CD4-positive, alpha-beta T cell (primary cell): ENCODE measurements at regions of chr4 and their contacts with region 1.

Region 1: GRCh38 chr4:81913427-81913879 is 441.7 kb upstream of the RASGEF1B start:
- DNase-seq: peak; percentile 11 to 75 (median 38)
- ATAC-seq: peak; percentile 82
- H3K4me3 ChIP-seq: no peak overlapping the region
- H3K4me3 Mint-ChIP-seq: no peak overlapping the region
- H3K27ac ChIP-seq: no peak overlapping the region
- H3K27ac Mint-ChIP-seq: no peak overlapping the region
- H3K4me1 ChIP-seq: no peaks in the 10 kb centered on the region
- H3K4me1 Mint-ChIP-seq: peaks cover 10% of the 10 kb centered on the region
- H3K27me3 ChIP-seq: peaks cover 0 to 4% of the 10 kb centered on the region in 2 experiments
- H3K27me3 Mint-ChIP-seq: peaks cover 5% of the 10 kb centered on the region
- CTCF ChIP-seq: peak; percentile 79

Region 2: GRCh38 chr4:81651243-81651899 is 262.1 kb before region 1 on chr4:
- CTCF ChIA-PET with region 1: no interaction called
- POLR2A ChIA-PET with region 1: no interaction called
- intact Hi-C with region 1: no loop called
- DNase-seq: no peak
- ATAC-seq: no peak
- H3K4me3 ChIP-seq: no peak overlapping the region
- H3K4me3 Mint-ChIP-seq: no peak overlapping the region
- H3K27ac ChIP-seq: no peak overlapping the region
- H3K27ac Mint-ChIP-seq: peak overlapping the region; percentile 31
- H3K4me1 ChIP-seq: peaks cover 4% of the 10 kb centered on the region
- H3K4me1 Mint-ChIP-seq: peaks cover 55% of the 10 kb centered on the region
- H3K27me3 ChIP-seq: no peaks in the 10 kb centered on the region
- H3K27me3 Mint-ChIP-seq: no peaks in the 10 kb centered on the region
- CTCF ChIP-seq: no peak

Region 3: DNA sequence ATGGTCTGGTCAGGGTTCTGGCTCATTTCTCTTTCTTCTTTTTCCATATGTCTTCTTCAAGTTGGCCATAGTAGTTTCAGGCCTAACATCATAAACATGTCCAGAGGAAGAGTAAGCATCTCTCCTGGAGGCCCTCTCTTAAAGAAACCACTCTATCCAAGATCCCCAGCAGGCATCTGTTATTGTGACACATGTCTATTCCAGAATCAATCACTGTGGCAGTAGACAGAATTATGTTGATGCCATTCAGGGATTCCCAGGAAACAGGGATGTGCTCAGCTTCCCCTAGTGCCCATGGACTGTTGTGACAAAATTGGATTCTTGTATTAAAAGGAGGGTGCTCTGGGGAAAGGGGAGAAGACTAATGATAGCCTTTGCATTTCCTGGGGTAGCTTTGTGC is 236.3 kb after region 1 on chr4:
- CTCF ChIA-PET with region 1: no interaction called
- POLR2A ChIA-PET with region 1: no interaction called
- intact Hi-C with region 1: no loop called
- DNase-seq: no peak
- ATAC-seq: no peak
- H3K4me3 ChIP-seq: no peak overlapping the region
- H3K4me3 Mint-ChIP-seq: no peak overlapping the region
- H3K27ac ChIP-seq: no peak overlapping the region
- H3K27ac Mint-ChIP-seq: no peak overlapping the region
- H3K4me1 ChIP-seq: peaks cover 5% of the 10 kb centered on the region
- H3K4me1 Mint-ChIP-seq: peaks cover 19% of the 10 kb centered on the region
- H3K27me3 ChIP-seq: no peaks in the 10 kb centered on the region
- H3K27me3 Mint-ChIP-seq: no peaks in the 10 kb centered on the region
- CTCF ChIP-seq: no peak

Region 4: GRCh38 chr4:82268050-82268825 is 354.8 kb after region 1 on chr4:
- CTCF ChIA-PET with region 1: no interaction called
- POLR2A ChIA-PET with region 1: no interaction called
- intact Hi-C with region 1: loop called (anchors 2 to 10 kb)
- DNase-seq: peak in 12 of 14 experiments; percentile 12 to 76 (median 34)
- ATAC-seq: peak; percentile 92
- H3K4me3 ChIP-seq: no peak overlapping the region
- H3K4me3 Mint-ChIP-seq: peak overlapping the region; percentile 70
- H3K27ac ChIP-seq: no peak overlapping the region
- H3K27ac Mint-ChIP-seq: peak overlapping the region; percentile 11
- H3K4me1 ChIP-seq: peaks cover 18% of the 10 kb centered on the region
- H3K4me1 Mint-ChIP-seq: peaks cover 34% of the 10 kb centered on the region
- H3K27me3 ChIP-seq: no peaks in the 10 kb centered on the region
- H3K27me3 Mint-ChIP-seq: no peaks in the 10 kb centered on the region
- CTCF ChIP-seq: peak; percentile 91